ENCODE measurements at regions of chr10 and their contacts with region 1.

Region 1: DNA sequence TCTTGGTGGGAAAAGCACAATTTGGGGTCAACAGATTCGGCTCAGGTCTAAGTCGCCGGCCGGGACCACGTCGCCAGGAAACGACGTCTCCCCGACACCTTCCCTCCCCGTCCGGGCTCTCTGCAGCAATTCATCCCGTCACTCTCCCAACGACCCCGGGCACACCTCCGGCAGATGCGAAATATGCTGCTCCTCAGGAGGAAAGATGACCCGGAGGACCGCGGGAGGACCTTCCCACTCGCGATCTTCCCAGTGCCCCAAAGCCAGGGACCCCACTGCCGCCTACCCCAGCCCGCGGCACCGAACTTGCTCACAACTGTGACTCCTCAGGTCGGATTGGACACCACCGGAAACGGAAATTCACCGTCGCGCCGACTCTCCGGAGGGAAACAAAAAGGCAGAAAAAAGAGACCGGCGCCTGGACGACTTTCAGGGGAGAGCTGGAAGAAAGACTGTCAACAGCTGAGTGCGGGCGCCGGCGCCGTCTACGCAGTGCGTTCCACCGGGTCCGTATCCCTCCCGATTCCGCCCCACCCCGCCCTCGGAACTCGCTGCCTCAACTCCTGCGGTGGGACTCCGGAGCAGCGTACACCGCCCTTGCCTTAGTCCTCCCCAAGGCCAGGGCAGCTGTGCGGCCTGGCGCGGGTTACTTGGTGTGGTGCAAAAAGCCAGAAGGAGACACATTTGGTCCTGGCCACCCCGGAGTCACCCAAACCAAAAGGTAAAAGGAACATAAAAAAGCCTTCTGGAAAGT is 13.8 kb upstream of the SEC24C start:
- DNase-seq: peak; percentile 63 to 98
- H3K4me3 ChIP-seq: peak overlapping the region; percentile 96 to 98 (median 98)
- H3K27ac ChIP-seq: peak overlapping the region; percentile 88
- H3K4me1 ChIP-seq: no peaks in the 10 kb centered on the region
- H3K27me3 ChIP-seq: no peaks in the 10 kb centered on the region
- CTCF ChIP-seq: no peak
- EP300 ChIP-seq: no peak
- POLR2A ChIP-seq: peak; percentile 64 to 88
- RAD21 ChIP-seq: no peak

Region 2: DNA sequence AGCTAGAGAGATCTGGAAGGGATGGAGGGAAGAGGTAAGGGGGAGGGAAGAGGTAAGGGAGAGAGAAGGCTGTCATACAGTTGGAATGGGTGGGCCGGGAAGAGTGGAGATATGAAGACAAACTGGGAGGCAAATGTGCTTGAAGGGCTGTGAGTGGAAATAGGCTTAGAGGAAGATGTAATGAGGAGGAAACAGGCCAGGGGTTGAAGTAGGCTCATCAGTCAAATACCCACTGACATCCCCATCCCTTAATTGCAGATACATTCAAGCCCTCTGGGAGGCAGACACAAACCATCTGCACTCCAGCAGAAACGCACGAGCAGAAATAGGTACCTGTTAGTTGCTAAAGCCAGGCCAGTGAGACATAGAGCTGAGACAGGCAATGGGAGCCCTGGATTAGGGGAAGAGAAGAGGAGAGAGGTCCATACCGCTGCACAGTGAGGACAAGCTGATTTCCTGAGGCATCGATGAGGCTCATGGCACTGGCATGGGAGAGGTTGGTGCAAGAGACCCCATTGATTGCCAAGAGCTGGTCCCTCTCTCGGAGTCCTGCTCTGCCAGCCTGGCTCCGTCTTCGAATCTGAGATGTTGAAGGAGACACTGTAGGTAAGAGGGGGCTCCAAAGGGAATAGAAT is 76.5 kb before region 1 on chr10:
- CTCF ChIA-PET with region 1: no interaction called
- POLR2A ChIA-PET with region 1: no interaction called
- DNase-seq: no peak
- H3K4me3 ChIP-seq: no peak overlapping the region
- H3K27ac ChIP-seq: no peak overlapping the region
- H3K4me1 ChIP-seq: no peaks in the 10 kb centered on the region
- H3K27me3 ChIP-seq: no peaks in the 10 kb centered on the region
- CTCF ChIP-seq: peak in 1 of 3 experiments; percentile 31; a peak in 1 of 4 replicates
- EP300 ChIP-seq: no peak
- POLR2A ChIP-seq: no peak
- RAD21 ChIP-seq: peak; percentile 41 to 57

Region 3: DNA sequence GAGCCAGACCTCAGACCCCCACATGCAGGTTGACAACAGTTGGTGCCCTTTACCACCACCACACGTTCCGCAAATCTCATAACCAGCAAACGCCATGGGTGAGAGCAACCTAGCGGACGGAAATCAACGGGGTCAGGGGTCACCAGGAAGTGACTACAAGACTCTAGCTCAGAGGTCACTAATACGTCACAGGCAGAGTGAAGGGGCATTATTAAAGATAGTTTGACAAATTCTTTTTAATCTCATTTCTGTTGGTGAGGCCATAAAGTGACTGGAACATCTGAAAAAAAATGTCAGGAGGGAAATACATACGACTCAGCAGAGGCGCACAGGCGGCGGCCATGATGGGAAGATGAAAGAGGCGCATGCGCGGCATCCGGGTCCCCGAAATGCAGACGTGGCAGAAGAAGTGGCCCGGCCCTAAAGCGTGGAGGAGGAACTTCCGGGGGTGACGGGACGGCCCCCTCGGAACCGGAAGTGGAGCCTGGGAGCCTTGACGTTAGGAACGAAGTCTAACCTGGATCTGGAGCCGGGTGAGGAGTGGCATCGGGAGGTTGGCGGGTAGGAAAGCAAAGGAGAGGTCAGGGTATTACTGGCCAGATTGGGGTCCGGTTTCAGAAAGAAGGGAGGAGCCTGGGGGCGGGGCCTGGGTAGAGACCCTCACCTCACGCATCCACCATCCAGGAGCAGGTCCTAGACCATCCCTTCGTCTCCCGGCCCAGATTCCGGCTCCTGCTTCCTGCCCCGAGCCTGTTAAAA is 13.8 kb after region 1 on chr10 and contains the start of gene SEC24C:
- CTCF ChIA-PET with region 1: interaction called, 4 read pairs
- POLR2A ChIA-PET with region 1: interaction called, 124 read pairs
- DNase-seq: peak; percentile 82 to 95
- H3K4me3 ChIP-seq: peak within 1 kb of the TSS; percentile 69 to 92 (median 82)
- H3K27ac ChIP-seq: peak within 1 kb of the TSS; percentile 93
- H3K4me1 ChIP-seq: peaks cover 5 to 20% (median 10%) of the 10 kb centered on the region in 4 experiments; a peak in 6 of 7 replicates
- H3K27me3 ChIP-seq: no peaks in the 10 kb centered on the region
- CTCF ChIP-seq: peak in 1 of 3 experiments; percentile 2; a peak in 2 of 4 replicates
- EP300 ChIP-seq: no peak
- POLR2A ChIP-seq: peak; percentile 25 to 68
- RAD21 ChIP-seq: no peak
- total RNA-seq, gene SEC24C: 63.2 and 66.8 TPM in 2 replicates

Region 4: DNA sequence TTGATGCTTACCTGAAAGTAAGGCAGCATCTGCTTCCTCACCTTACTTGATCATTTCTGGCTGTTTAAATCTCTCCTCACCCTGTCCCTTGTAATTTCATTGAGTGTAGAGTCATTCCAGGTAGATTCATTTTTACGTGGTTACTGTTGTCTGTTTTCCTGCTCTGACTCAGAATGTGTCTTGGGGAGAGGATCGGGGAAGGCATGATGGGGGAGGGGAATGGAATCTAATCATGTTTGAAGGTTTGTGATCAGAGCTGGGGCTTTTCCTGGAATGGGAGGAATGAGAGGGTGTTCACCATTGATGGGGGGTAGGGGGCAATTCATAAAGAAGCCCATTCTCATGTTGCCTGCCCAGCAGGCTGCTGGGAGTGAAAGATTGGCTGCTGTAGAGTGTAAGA is 32.6 kb after region 1 on chr10:
- CTCF ChIA-PET with region 1: no interaction called
- POLR2A ChIA-PET with region 1: no interaction called
- DNase-seq: no peak
- H3K4me3 ChIP-seq: no peak overlapping the region
- H3K27ac ChIP-seq: no peak overlapping the region
- H3K4me1 ChIP-seq: no peaks in the 10 kb centered on the region
- H3K27me3 ChIP-seq: no peaks in the 10 kb centered on the region
- CTCF ChIP-seq: no peak
- EP300 ChIP-seq: no peak
- POLR2A ChIP-seq: no peak
- RAD21 ChIP-seq: no peak

Measured in H1 (cell line).